ENCODE measurements at regions of chr20 and their contacts with region 1.

Region 1: GRCh38 chr20:25247956-25248785 is at the start of gene PYGB:
- DNase-seq: peak; percentile 81
- H3K4me3 ChIP-seq: peak within 1 kb of the TSS; percentile 80
- H3K27ac ChIP-seq: peak within 1 kb of the TSS; percentile 47
- H3K4me1 ChIP-seq: peaks cover 38% of the 10 kb centered on the region
- CTCF ChIP-seq: no peak
- total RNA-seq, gene PYGB: 4.5 and 4.9 TPM in 2 replicates

Region 2: DNA sequence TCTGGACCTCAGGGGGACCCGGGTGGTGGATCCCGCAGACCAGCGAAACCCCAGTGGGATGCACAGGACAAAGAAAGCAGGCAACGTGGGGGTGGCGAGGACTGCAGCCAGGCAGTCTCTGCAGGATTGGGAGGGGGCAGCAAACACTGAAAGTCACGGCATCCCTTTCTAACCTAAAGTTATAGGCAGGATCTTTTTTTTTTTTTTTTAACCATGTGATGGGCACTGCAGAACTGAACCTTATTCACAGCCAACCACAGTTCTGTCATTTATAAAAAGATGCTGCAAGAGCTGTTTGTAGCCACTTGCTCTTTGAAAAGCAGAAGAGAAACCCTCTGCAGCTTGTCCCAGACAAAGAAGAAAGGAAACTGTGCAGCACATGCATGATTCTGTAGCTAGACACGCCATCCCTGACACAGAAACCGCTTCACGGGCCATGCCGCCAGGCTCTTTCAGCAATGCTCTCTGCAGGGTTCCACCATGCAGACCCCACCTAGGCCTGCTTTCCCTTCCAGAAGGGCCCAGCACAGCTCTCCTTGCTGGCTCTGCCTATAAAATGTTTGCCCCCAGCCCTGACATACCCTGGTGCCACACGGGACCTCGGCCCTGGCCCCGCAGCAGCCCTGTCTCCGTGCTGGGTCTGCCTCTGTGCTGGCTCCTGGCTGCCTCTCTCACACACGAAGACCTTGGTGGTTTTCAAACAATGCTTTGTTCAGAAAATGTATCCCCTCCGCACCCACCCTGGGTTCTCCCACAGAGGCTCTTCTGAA is 70.5 kb after region 1 on chr20:
- CTCF ChIA-PET with region 1: no interaction called
- POLR2A ChIA-PET with region 1: no interaction called
- intact Hi-C with region 1: no loop called
- DNase-seq: peak; percentile 93
- H3K4me3 ChIP-seq: peak overlapping the region; percentile 48
- H3K27ac ChIP-seq: peak overlapping the region; percentile 86
- H3K4me1 ChIP-seq: peaks cover 38% of the 10 kb centered on the region
- CTCF ChIP-seq: no peak; the same call in 1 of the 2 replicates

Region 3: DNA sequence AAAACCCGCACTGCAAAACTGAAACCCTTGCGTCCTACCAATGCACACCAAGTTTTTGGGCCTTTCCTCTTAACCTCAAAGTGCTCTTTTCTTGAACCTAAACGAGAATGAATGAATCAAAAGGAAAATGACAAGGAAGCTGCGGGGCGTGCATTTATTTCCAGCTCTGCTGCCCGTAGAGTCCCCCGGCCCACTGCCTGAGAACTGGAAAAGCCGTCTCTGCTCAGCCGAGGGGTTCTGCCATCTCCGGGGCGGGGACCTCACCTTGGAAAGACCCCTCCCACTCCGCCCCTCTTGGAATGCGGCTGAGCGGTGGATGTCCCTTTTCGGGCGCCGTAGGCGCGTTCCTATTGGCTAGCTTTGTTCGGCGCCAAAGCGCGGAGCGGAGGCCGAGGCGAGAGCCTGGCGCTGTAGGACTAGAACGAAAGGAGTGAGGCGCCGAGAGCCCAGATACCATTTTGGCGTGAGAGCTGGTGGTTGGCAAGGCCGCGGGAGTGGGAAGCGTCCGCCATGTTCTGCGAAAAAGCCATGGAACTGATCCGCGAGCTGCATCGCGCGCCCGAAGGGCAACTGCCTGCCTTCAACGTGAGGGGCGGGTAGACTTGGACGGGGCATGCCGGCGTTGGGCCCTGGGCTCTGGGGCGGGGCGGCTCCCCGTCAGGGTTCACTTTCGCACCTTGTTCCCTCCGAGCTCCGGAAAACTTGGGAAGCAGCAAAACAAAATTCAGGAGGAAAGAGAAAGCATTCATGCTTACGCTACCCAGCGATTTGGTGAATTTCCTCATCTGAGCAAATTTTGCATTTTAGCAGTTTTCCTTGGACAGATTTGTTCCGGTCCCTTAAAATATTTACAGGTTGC is 159.4 kb after region 1 on chr20 and contains the start of gene GINS1:
- CTCF ChIA-PET with region 1: no interaction called
- POLR2A ChIA-PET with region 1: interaction called, 4 read pairs
- intact Hi-C with region 1: loop called (anchors 5 kb)
- DNase-seq: peak; percentile 86
- H3K4me3 ChIP-seq: peak within 1 kb of the TSS; percentile 83
- H3K27ac ChIP-seq: peak within 1 kb of the TSS; percentile 58
- H3K4me1 ChIP-seq: peaks cover 16% of the 10 kb centered on the region
- CTCF ChIP-seq: no peak
- total RNA-seq, gene GINS1: 22.8 and 23.0 TPM in 2 replicates